Endothelial cell of umbilical vein (primary cell): ENCODE measurements at regions of chr1 and their contacts with region 1.

Region 1: GRCh38 chr1:245045087-245045881 is 109.5 kb upstream of the KIF26B start:
- DNase-seq: no peak
- H3K4me3 ChIP-seq: no peak overlapping the region
- H3K27ac ChIP-seq: no peak overlapping the region
- H3K4me1 ChIP-seq: no peaks in the 10 kb centered on the region
- H3K27me3 ChIP-seq: no peaks in the 10 kb centered on the region
- CTCF ChIP-seq: no peak
- POLR2A ChIP-seq: no peak

Region 2: GRCh38 chr1:244652699-244653466 is 392.4 kb before region 1 on chr1 and contains the start of gene DESI2:
- CTCF ChIA-PET with region 1: interaction called, 3 read pairs
- POLR2A ChIA-PET with region 1: no interaction called
- dilution Hi-C with region 1: no loop called
- intact Hi-C with region 1: loop called (anchors 2 kb)
- DNase-seq: peak; percentile 99
- H3K4me3 ChIP-seq: peak within 1 kb of the TSS; percentile 58 to 98 (median 90)
- H3K27ac ChIP-seq: peak within 1 kb of the TSS; percentile 83
- H3K4me1 ChIP-seq: peaks cover 16% of the 10 kb centered on the region
- H3K27me3 ChIP-seq: peaks cover 2 to 3% of the 10 kb centered on the region in 2 experiments
- CTCF ChIP-seq: peak; percentile 31 to 54
- POLR2A ChIP-seq: peak; percentile 96
- total RNA-seq, gene DESI2: 37.2 TPM in 2 replicates

Region 3: GRCh38 chr1:244835276-244836134 is 209.8 kb before region 1 on chr1 and contains the start of gene COX20:
- CTCF ChIA-PET with region 1: interaction called, 49 read pairs
- POLR2A ChIA-PET with region 1: no interaction called
- dilution Hi-C with region 1: no loop called
- intact Hi-C with region 1: loop called (anchors 1 kb)
- DNase-seq: peak; percentile 91
- H3K4me3 ChIP-seq: peak within 1 kb of the TSS; percentile 36 to 85 (median 80)
- H3K27ac ChIP-seq: peak within 1 kb of the TSS; percentile 85
- H3K4me1 ChIP-seq: peaks cover 23% of the 10 kb centered on the region
- H3K27me3 ChIP-seq: no peaks in the 10 kb centered on the region
- CTCF ChIP-seq: no peak
- POLR2A ChIP-seq: peak; percentile 68
- total RNA-seq, gene COX20: 30.2 and 37.0 TPM in 2 replicates

Region 4: DNA sequence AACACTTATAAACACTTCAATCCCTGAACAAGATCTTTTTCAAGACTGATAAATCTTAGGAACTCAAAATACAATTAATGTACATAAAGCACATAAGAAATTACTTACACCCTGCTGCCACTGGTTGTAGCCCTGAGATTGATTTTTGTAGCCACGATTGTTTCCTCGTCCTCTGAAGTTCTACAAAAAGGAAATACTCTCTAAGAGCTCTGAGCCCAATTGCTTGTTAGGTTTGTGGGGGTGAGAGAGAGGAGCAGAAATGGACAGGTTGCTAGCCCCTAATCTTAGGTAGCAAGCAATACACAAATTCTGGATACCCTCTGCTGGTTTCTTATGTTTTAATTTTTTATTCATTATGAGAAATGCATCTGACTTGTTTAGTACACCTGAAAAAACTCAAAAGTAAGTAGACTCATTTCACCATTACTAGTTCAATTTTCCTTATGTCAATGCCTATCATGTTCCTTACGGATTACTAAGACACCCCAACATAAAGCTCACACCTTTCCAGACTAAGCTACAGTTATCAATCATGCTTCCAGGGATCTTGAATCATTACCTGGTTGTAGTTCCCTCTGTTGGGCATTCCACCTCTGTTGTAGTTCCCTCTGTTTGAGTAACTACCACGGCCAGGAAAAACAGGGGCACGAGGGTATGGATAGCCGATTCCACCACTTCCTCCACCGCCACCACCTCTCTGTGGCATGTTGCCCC is 190.3 kb before region 1 on chr1:
- CTCF ChIA-PET with region 1: interaction called, 30 read pairs
- POLR2A ChIA-PET with region 1: no interaction called
- dilution Hi-C with region 1: no loop called
- intact Hi-C with region 1: no loop called
- DNase-seq: no peak
- H3K4me3 ChIP-seq: no peak overlapping the region
- H3K27ac ChIP-seq: no peak overlapping the region
- H3K4me1 ChIP-seq: peaks cover 6% of the 10 kb centered on the region
- H3K27me3 ChIP-seq: no peaks in the 10 kb centered on the region
- CTCF ChIP-seq: no peak
- POLR2A ChIP-seq: no peak

Region 5: GRCh38 chr1:244964112-244964971 is 80.9 kb before region 1 on chr1:
- CTCF ChIA-PET with region 1: interaction called, 35 read pairs
- POLR2A ChIA-PET with region 1: no interaction called
- dilution Hi-C with region 1: no loop called
- intact Hi-C with region 1: no loop called
- DNase-seq: peak; percentile 82
- H3K4me3 ChIP-seq: peak overlapping the region in 1 of 3 experiments; percentile 15
- H3K27ac ChIP-seq: peak overlapping the region; percentile 95
- H3K4me1 ChIP-seq: peaks cover 34% of the 10 kb centered on the region
- H3K27me3 ChIP-seq: no peaks in the 10 kb centered on the region
- CTCF ChIP-seq: no peak
- POLR2A ChIP-seq: peak; percentile 49

Region 6: GRCh38 chr1:244989813-244990212 is 55.5 kb before region 1 on chr1:
- CTCF ChIA-PET with region 1: interaction called, 14 read pairs
- POLR2A ChIA-PET with region 1: no interaction called
- dilution Hi-C with region 1: no loop called
- intact Hi-C with region 1: no loop called
- DNase-seq: peak; percentile 35
- H3K4me3 ChIP-seq: no peak overlapping the region
- H3K27ac ChIP-seq: peak overlapping the region; percentile 34
- H3K4me1 ChIP-seq: peaks cover 24% of the 10 kb centered on the region
- H3K27me3 ChIP-seq: no peaks in the 10 kb centered on the region
- CTCF ChIP-seq: no peak
- POLR2A ChIP-seq: no peak

Region 7: GRCh38 chr1:245031041-245031440 is 14.2 kb before region 1 on chr1:
- CTCF ChIA-PET with region 1: interaction called, 23 read pairs
- POLR2A ChIA-PET with region 1: interaction called, 3 read pairs
- dilution Hi-C with region 1: no loop called
- intact Hi-C with region 1: no loop called
- DNase-seq: no peak
- H3K4me3 ChIP-seq: no peak overlapping the region
- H3K27ac ChIP-seq: no peak overlapping the region
- H3K4me1 ChIP-seq: no peaks in the 10 kb centered on the region
- H3K27me3 ChIP-seq: no peaks in the 10 kb centered on the region
- CTCF ChIP-seq: no peak
- POLR2A ChIP-seq: no peak